ENCODE measurements at regions of chr6 and their contacts with region 1.

Region 1: GRCh38 chr6:10837995-10838793 is at the start of gene MAK:
- DNase-seq: peak; percentile 86
- H3K4me3 Mint-ChIP-seq: peak within 1 kb of the TSS; percentile 77
- H3K27ac Mint-ChIP-seq: peak within 1 kb of the TSS; percentile 98
- H3K4me1 Mint-ChIP-seq: peaks cover 21% of the 10 kb centered on the region
- H3K27me3 Mint-ChIP-seq: peaks cover 25% of the 10 kb centered on the region
- total RNA-seq, gene MAK: 0.41 and 0.71 TPM in 2 replicates

Region 2: DNA sequence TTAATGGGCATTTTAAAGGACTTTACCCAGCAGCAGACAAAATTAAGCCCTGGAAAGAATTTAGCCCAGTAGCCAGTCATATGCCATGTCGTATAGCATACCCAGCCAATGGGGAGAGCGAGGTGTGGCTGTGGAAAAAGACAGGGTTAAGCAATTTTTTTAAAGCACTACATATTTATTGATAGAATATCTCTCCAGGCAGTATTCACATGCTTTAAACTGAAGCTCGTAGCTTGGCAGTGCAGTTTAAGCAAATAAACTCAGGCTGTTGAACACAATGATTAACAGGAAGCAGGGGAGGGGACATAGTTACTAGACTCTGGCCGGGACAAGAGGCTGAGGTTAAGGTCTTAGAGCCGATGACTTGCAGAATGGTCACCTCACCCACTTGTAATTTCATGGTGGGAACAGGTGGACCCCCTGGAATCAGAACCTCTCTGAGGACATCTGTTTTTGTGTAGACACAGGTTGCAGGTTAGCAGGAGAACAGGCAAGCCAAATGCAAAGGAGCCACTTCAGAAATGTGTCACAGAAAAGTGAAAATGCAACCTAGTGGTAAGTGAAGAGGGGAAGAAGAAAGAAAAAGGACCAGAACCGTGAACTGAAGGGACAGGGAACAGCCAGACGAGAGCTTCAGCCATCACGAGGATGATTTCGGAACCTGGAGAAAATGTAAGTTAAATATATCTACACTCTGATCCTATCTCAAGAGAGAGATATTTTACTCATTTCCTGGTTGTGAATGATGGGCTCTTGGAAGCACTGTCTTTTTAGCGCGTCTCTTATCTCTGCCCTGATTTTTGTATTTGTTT is 309.8 kb before region 1 on chr6:
- intact Hi-C with region 1: loop called (anchors 5 kb)
- DNase-seq: peak; percentile 22
- H3K4me3 Mint-ChIP-seq: peak overlapping the region; percentile 78
- H3K27ac Mint-ChIP-seq: peak overlapping the region; percentile 88
- H3K4me1 Mint-ChIP-seq: peaks cover 45% of the 10 kb centered on the region
- H3K27me3 Mint-ChIP-seq: no peaks in the 10 kb centered on the region

Region 3: DNA sequence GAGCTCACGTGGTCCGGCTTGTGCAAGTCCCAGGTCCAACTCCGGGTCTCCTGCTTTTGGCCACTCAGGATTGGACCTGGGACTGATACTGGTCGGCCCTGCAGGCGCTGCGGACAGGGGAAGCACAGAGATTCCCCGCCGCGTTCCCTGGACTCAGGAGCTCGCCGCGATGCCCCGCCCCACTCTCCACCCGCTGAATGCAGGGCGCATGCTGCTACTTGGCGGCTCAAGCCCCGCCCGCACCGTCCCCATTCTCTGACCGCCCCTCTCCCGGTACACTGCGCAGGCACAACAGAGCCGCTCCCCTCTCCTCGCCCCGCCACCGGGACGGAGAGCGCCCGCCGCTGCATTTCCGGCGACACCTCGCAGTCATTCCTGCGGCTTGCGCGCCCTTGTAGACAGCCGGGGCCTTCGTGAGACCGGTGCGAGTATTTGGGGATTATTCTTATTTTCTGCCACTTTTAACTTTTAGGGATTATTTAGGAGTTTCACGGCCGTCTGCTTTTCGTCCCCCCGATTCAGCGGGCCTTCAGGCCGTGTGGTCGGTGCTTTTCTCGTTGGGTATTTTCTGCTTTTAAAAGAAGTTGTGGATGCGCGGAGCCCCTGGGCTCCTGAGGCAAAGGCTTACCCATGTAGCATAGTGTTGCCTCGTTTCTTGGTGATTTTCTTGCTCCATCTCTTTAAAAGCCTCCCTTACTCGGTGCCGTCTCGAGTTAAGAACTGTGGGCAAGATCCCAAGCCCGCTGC is 115.2 kb before region 1 on chr6 and contains the start of gene TMEM14C:
- intact Hi-C with region 1: loop called (anchors 1 kb)
- DNase-seq: peak; percentile 88
- H3K4me3 Mint-ChIP-seq: peak within 1 kb of the TSS; percentile 87
- H3K27ac Mint-ChIP-seq: peak within 1 kb of the TSS; percentile 92
- H3K4me1 Mint-ChIP-seq: peaks cover 38% of the 10 kb centered on the region
- H3K27me3 Mint-ChIP-seq: no peaks in the 10 kb centered on the region
- total RNA-seq, gene TMEM14C: 61.3 and 65.4 TPM in 2 replicates

Region 4: GRCh38 chr6:10824297-10824696 is 13.9 kb before region 1 on chr6:
- intact Hi-C with region 1: no loop called
- DNase-seq: no peak
- H3K4me3 Mint-ChIP-seq: no peak overlapping the region
- H3K27ac Mint-ChIP-seq: no peak overlapping the region
- H3K4me1 Mint-ChIP-seq: no peaks in the 10 kb centered on the region
- H3K27me3 Mint-ChIP-seq: no peaks in the 10 kb centered on the region

Region 5: GRCh38 chr6:10880366-10880765 is 42.2 kb after region 1 on chr6:
- intact Hi-C with region 1: loop called (anchors 2 kb)
- DNase-seq: no peak
- H3K4me3 Mint-ChIP-seq: no peak overlapping the region
- H3K27ac Mint-ChIP-seq: no peak overlapping the region
- H3K4me1 Mint-ChIP-seq: peaks cover 6% of the 10 kb centered on the region
- H3K27me3 Mint-ChIP-seq: peaks cover 65% of the 10 kb centered on the region